ENCODE measurements at regions of chr9 and their contacts with region 1.

Region 1: GRCh38 chr9:129495534-129496325 is 125.2 kb downstream of the C9orf50 start:
- DNase-seq: peak; percentile 97
- H3K4me3 ChIP-seq: peak overlapping the region; percentile 64 to 71 (median 66)
- H3K27ac ChIP-seq: peak overlapping the region; percentile 97 to 100 (median 98)
- H3K4me1 ChIP-seq: peaks cover 71 to 98% (median 97%) of the 10 kb centered on the region in 4 donors
- H3K27me3 ChIP-seq: no peaks in the 10 kb centered on the region
- CTCF ChIP-seq: peak in 1 of 3 experiments; percentile 6
- EP300 ChIP-seq: no peak
- POLR2A ChIP-seq: peak; percentile 15

Region 2: GRCh38 chr9:129182625-129183495 is 312.9 kb before region 1 on chr9:
- intact Hi-C with region 1: loop called (anchors 5 kb)
- DNase-seq: no peak
- H3K4me3 ChIP-seq: no peak overlapping the region
- H3K27ac ChIP-seq: no peak overlapping the region
- H3K4me1 ChIP-seq: peaks cover 6 to 23% (median 12%) of the 10 kb centered on the region in 4 donors
- H3K27me3 ChIP-seq: no peaks in the 10 kb centered on the region
- CTCF ChIP-seq: peak in 1 of 3 experiments; percentile 42
- EP300 ChIP-seq: no peak
- POLR2A ChIP-seq: no peak

Region 3: GRCh38 chr9:129333953-129334724 is 161.6 kb before region 1 on chr9:
- intact Hi-C with region 1: loop called (anchors 5 kb)
- DNase-seq: peak; percentile 98
- H3K4me3 ChIP-seq: peak overlapping the region; percentile 19 to 45 (median 30)
- H3K27ac ChIP-seq: peak overlapping the region; percentile 82 to 92 (median 87)
- H3K4me1 ChIP-seq: peaks cover 40 to 73% (median 64%) of the 10 kb centered on the region in 4 donors
- H3K27me3 ChIP-seq: no peaks in the 10 kb centered on the region
- CTCF ChIP-seq: no peak
- EP300 ChIP-seq: peak; percentile 90
- POLR2A ChIP-seq: no peak

Region 4: DNA sequence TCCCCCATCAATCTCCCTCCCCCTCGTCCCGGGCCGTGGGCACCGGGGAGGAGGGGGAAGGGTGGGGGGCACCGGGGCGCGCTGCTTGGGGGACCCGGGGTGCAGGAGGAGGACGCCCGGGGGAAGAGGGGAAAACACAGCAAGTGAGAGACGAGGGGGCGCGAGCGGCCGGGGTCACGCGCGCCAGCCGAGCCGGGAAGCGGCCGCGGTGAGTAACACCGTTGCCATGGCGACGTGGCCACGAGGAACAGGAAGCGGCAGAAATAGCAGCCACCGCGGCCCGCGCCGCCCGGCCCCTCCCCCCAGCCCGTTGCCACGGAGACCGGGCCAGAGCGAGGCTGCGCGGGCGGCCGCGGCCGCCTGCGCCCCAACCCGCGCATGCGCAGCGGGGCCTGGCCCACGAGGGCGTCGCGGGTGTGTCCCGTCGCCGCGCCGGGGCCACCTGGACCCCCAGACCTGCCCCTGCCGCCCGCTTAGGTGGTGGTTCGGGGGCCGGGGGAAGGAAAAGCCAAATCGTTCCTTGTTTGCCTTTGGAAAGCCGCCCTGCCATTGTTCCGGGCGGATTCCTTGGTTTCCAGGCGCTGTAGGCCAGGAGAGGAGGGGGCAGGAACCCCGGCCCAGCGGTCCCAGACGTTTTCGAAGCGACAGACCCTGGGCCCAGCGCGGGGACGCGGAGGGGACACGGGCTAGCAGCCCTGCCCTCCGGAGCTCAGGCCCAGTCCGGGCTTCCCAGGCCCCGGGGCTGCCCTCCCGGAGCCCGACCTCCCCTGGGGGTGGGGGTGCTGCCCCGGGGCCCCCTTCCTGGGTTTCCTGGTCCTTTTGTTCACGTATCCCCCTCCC is 82.0 kb before region 1 on chr9:
- intact Hi-C with region 1: loop called (anchors 5 kb)
- DNase-seq: peak; percentile 99
- H3K4me3 ChIP-seq: peak overlapping the region; percentile 64 to 74 (median 70)
- H3K27ac ChIP-seq: peak overlapping the region; percentile 95 to 100 (median 98)
- H3K4me1 ChIP-seq: peaks cover 31 to 53% (median 36%) of the 10 kb centered on the region in 4 donors
- H3K27me3 ChIP-seq: no peaks in the 10 kb centered on the region
- CTCF ChIP-seq: peak in 1 of 3 experiments; percentile 16
- EP300 ChIP-seq: no peak
- POLR2A ChIP-seq: peak; percentile 69

Region 5: GRCh38 chr9:129549685-129550084 is 54.0 kb after region 1 on chr9:
- intact Hi-C with region 1: loop called (anchors 5 kb)
- DNase-seq: no peak
- H3K4me3 ChIP-seq: peak overlapping the region; percentile 61 to 74 (median 65)
- H3K27ac ChIP-seq: peak overlapping the region; percentile 71 to 84 (median 74)
- H3K4me1 ChIP-seq: peaks cover 24 to 26% (median 25%) of the 10 kb centered on the region in 4 donors
- H3K27me3 ChIP-seq: no peaks in the 10 kb centered on the region
- CTCF ChIP-seq: no peak
- EP300 ChIP-seq: no peak
- POLR2A ChIP-seq: no peak

Region 6: DNA sequence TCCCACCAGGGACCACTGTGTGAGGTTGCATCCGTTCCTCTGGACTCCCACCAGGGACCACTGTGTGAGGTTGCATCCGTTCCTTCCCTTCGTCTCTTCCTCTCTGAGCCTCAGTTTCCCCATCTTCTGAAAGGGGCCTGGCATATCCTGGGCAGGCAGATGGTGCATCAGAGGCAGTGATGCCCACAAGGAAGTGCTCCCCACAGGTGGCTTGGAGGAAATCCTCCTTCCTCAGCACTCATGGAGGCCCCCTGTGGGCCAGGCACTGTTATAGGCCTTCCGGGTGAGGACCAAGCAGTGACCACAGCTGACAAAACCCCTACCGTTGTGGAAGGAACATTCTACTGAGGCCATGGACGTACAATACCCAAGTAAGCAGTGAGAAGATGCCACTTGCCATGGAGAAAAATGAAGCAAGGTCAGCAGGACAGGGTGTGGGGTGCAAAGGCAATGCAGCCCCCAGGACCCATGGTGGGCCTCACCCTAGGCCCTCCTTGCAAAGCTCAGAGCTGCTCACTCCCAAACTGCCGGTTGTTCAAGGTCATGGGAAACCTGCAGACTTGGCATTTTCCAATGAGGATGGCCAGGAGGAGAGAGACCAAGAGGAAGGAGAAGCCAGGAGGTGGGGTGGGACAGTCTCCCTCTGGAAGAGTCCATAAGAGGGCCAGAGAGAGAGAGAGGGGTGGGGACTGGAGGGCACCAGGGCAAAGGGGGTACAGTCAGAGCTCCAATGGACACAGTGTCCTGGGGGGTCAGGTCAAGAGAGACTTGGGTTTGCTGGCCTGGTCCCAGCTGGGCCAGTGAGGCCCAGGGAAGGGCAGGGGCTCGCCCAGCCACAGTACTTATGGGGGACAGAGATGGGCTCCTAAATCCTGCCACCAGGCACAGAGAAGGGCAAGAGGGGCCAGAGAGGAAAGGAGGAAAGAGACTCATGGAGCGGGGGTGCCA is 74.0 kb after region 1 on chr9:
- intact Hi-C with region 1: loop called (anchors 5 kb)
- DNase-seq: no peak
- H3K4me3 ChIP-seq: peak overlapping the region; percentile 67 to 70 (median 68)
- H3K27ac ChIP-seq: peak overlapping the region; percentile 84 to 89 (median 88)
- H3K4me1 ChIP-seq: peaks cover 30 to 50% (median 42%) of the 10 kb centered on the region in 4 donors
- H3K27me3 ChIP-seq: no peaks in the 10 kb centered on the region
- CTCF ChIP-seq: peak in 2 of 3 experiments; percentile 30 to 44
- EP300 ChIP-seq: no peak
- POLR2A ChIP-seq: no peak

Region 7: GRCh38 chr9:129610473-129611301 is 115.0 kb after region 1 on chr9:
- intact Hi-C with region 1: loop called (anchors 5 kb)
- DNase-seq: no peak
- H3K4me3 ChIP-seq: peak overlapping the region; percentile 66 to 84 (median 76)
- H3K27ac ChIP-seq: peak overlapping the region; percentile 89 to 95 (median 90)
- H3K4me1 ChIP-seq: peaks cover 43 to 66% (median 54%) of the 10 kb centered on the region in 4 donors
- H3K27me3 ChIP-seq: no peaks in the 10 kb centered on the region
- CTCF ChIP-seq: peak; percentile 76 to 99 (median 98)
- EP300 ChIP-seq: no peak
- POLR2A ChIP-seq: no peak

Measured in esophagus muscularis mucosa (tissue), 4 donors.